Heart right ventricle (tissue), 16 donors: ENCODE measurements at regions of chr13 and their contacts with region 1.

Region 1: DNA sequence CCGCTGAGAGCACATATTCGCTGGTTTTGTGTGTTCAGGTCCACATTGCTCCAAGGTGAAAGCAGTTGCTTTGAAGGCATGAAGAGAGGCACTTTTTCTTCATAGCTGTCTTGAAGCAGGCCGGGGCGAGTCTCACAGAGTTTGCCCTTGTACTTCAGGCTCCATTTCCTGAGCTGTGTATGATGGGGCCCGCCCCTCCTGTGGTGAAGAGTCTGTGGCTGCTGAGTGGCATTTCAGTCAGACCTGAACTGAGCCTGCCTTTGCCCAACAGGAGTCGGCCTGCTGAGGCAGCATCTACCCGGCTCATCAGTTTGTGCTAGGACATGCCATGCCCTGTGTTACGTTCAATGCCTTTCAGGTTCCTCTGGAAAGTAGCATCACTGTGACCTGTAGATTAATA is 44.4 kb upstream of the C1QTNF9 start:
- DNase-seq: no peak
- ATAC-seq: peak in 5 of 8 donors; percentile 28 to 65 (median 43)
- H3K4me3 ChIP-seq: no peak overlapping the region
- H3K27ac ChIP-seq: peak overlapping the region in 9 of 10 donors; percentile 0 to 71 (median 51)
- H3K4me1 ChIP-seq: peaks cover 0 to 67% (median 33%) of the 10 kb centered on the region in 9 donors
- H3K27me3 ChIP-seq: no peaks in the 10 kb centered on the region
- CTCF ChIP-seq: no peak

Region 2: GRCh38 chr13:25963674-25964073 is 1698.7 kb after region 1 on chr13:
- intact Hi-C with region 1: loop called in 1 of 10 experiments (anchors 5 kb)
- DNase-seq: no peak
- ATAC-seq: peak in 1 of 8 donors; percentile 48
- H3K4me3 ChIP-seq: no peak overlapping the region
- H3K27ac ChIP-seq: no peak overlapping the region
- H3K4me1 ChIP-seq: no peaks in the 10 kb centered on the region
- H3K27me3 ChIP-seq: peaks cover 0 to 14% (median 0%) of the 10 kb centered on the region in 7 donors
- CTCF ChIP-seq: no peak